Ascending aorta (tissue), 2 donors: ENCODE measurements at regions of chr3 and their contacts with region 1.

Region 1: DNA sequence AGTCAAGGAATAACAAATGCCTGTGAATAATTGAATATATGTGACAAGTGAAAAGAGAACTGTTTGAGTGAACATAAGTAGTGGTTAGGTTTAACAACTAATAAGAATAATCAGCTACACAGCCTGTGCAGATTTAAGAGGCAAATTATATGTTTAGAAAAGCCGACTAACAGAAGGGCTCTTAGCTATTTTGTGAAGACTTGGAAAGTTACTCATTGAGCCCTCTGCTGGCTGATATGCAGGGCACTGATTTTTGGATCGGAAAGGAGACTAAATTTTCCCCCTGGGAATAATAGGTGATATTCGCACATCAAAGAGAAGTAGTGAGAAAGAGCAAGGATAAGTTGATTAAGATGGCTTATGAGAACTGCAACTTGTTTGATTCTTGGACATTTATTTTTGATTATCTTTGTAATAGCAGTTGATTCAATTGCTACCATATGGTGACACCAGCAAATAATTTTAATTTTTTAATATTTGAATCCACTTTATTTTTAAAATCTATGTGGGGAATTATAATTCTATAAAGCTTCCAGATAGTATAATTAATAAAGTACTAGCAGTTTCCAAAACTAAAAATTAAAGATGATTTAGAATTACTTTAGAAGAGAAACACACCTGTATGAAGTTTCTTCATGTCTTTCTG is 156.2 kb downstream of the NLGN1 start:
- DNase-seq: no peak
- H3K4me3 ChIP-seq: no peak overlapping the region
- H3K27ac ChIP-seq: no peak overlapping the region
- H3K4me1 ChIP-seq: no peaks in the 10 kb centered on the region
- H3K27me3 ChIP-seq: no peaks in the 10 kb centered on the region
- CTCF ChIP-seq: peak; percentile 37 to 74 (median 52)

Region 2: DNA sequence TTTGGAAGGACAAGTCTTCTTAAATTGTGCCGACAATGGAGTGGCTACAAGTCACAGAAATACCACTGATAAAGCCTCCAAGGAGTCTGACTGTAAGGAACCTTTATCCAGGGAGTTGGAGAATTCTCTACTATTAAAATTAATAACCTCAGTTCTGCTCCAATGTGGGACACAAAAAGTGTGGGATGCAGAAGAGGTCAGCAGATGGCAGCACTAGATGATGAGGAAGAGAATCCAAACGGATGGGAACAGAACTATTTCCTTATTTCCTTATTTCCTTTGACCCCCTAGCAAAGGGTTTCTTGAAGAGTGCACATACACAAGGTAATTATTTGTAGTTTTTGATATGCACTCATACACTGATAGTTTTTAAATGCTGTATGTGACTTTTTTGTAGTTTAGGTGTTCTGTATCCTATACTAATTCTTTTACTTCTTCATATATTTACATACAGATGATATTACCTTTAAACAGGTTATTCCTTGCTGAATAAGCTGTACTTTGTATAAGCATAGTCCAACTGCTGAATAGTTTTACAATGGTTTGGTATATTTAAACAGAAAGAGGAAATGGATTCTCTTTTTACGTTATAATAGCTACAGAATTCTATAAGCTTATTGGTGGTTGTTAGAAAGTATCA is 181.8 kb before region 1 on chr3:
- intact Hi-C with region 1: loop called (anchors 2 kb)
- DNase-seq: no peak
- H3K4me3 ChIP-seq: no peak overlapping the region
- H3K27ac ChIP-seq: no peak overlapping the region
- H3K4me1 ChIP-seq: no peaks in the 10 kb centered on the region
- H3K27me3 ChIP-seq: no peaks in the 10 kb centered on the region
- CTCF ChIP-seq: peak in 2 of 3 experiments; percentile 58 to 63

Region 3: DNA sequence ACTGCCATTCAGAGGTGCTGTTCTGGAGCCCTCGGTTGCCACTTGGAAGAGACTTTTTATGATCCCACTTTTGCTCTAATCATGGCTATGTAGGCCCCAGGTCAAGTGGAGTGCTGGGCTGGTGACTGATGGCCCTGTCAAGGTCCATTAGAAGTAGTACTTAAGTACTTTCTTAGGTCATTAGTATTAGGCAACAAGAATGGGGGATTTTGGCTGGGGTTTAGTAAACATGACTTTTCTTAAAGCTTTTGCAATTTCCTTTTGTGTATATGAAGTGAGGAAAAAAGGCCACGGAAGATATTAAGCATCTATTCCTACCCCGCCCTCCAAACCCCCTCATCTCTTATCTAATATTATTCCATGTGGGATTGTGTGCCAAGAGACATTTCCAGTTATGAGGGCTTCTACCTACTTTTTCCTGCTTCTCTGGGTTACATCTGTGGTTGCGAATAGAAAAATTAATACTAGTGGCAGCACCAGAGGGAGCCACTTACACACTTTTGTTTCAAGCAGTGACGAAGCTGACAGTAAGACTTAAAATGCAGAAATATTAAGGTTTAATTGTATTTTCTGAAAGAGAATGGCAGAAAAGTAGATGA is 142.3 kb before region 1 on chr3:
- intact Hi-C with region 1: loop called (anchors 5 kb)
- DNase-seq: no peak
- H3K4me3 ChIP-seq: peak overlapping the region in 1 of 2 donors; percentile 4
- H3K27ac ChIP-seq: no peak overlapping the region
- H3K4me1 ChIP-seq: peaks cover 0 to 8% of the 10 kb centered on the region in 2 donors
- H3K27me3 ChIP-seq: no peaks in the 10 kb centered on the region
- CTCF ChIP-seq: peak; percentile 19 to 62 (median 22)